ACHN (cell line): ENCODE measurements at regions of chr3 and their contacts with region 1.

Region 1: DNA sequence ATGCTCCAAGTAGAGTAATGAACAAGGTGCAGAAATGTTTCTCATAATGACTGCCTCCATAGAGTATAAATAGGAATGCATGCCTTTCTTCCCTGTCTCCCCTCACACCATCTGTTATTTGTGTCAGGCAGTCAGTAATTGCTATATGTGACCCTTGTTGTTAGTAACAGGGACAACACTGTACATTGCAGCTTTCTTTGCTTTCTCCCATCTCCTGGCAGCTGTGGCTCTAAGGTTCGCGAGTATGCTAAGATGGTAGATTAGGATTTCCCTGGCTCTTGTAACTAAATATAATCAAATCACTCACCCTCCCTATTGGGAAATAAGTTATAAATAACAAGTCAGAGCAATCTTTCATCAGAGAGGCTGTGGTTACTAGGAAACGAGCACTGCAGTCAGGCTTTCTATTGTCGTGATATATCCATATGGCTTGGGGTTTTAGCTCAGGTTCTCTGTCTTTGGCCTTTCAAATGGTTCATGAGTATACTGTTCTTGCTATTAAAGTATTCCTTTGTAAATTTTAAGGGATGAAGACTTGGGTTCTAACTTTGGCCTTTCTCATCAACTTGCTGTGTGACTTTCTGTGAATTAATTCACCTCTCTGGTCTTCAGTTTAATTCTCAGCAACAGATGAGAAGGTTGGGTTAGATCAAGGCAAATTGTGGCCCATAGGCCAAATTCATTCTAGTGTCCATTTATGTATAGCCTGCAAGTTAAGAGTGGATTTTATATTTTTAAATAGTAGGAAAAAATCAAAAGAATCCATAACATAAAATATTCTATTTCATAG is 8.1 kb upstream of the MINDY4B start:
- DNase-seq: no peak

Region 2: DNA sequence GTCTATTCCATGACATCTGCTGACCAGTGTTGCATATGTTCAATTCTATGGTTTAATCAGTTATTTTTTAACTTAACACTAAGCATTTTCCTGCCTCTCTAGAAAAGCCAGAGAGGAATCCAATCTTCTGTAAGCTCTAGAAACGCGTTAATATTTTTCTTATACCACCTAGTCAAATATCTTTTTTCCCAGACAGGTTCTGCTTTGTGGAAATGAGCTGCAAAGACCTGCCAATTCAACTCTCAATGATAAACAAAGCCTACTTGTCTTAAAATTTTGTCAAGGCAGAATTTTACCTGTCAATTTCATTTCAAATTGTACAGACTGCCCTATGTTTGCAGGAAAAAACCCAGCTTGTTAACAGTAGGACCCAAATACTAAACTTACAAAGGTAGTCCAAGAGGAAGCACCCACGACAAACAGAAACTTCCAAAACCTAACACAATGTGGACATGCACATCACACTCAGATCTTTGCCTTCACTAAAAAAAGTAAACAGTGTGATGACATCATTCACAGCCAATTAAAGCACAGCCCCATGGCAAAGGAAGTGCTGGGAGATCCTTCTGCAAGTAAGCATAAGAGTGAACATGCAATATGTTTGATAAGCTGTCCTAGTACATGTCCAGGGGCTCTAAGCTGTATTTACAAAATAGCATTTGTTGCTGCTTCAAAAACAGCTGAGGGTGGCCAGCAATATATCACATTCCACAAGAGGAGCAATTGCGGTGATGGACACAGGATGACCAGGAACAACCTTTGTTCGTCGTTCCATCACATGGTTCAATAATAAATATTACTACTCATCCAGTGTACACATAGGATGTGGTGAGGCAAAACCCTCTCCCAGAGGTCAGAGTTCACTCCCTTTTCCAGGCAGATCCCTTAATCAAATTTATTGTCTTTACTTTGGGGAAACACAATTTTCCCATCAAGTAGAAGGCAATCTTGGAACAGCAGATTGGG is 644.6 kb before region 1 on chr3:
- in situ Hi-C with region 1: no loop called
- DNase-seq: no peak

Region 3: DNA sequence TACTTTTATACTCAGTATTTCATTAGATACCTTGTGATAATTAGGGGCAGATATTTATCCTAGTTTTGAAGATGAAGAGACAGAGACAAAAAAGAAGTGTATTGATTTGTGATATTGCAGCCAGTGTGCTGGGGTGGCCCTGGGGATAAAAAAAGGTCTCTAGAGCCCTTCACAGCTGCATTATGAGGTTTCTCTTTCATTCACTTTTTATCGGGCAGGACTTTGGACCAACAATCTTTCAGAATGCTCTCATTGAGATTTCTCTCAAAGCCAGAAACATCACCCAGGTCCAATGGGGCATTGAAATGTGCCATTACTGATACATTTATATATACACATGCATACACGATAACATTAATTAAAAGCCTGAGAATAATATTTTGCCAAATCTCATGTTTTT is 330.7 kb before region 1 on chr3:
- in situ Hi-C with region 1: no loop called
- DNase-seq: no peak

Region 4: GRCh38 chr3:151146071-151146730 is 232.9 kb after region 1 on chr3:
- in situ Hi-C with region 1: loop called (anchors 25 kb)
- DNase-seq: peak; percentile 70